ENCODE measurements at regions of chr9 and their contacts with region 1.

Region 1: DNA sequence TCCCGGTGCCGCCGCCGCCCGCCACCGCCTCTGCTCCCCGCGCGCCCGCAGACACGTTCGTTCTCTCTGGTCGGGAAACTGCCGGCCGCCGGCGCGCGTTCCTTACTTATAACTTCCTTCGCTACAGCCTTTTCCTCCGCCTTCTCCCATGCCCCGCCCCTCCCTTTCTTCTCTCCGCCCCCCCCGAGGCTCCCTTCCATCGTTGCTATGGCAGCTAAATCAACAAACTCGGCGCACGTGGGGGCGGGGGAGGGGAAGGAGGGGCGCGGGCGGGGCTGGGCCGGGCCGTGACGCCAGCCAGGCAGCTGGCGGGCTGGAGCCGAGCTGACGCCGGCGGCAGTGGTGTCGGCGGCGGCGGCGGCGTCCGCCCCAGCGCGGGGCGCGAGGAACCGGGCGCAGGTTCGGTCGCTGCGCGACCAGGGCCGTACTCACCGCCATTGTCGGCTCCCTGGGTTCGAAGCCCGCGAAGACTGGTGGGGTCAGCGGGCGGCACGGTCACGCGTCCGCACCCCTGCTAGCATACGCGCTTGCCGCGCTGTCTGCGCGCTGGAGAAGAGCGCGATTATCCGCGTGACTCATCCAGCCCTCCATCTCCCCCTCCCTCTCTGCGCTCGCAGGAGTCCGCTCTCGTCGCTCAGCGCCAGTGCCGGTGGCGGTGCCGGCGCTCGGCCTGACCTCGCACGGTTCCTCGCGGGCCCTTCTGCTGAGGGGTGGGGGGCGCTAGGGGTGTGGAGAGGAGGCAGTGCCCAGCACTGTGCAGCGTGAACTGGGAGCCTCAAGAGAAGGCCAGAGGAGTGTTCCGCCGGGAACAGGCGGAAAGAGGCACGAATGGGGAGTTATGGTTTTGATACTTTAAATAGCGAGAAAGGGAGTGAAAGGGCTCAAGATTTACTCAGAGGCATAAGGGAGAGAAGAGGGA is at the start of gene KLF4:
- DNase-seq: peak; percentile 91 to 96
- H3K4me3 ChIP-seq: peak within 1 kb of the TSS; percentile 79
- H3K27ac ChIP-seq: peak within 1 kb of the TSS; percentile 91 to 94
- H3K4me1 ChIP-seq: peaks cover 0 to 41% (median 16%) of the 10 kb centered on the region in 4 donors
- H3K27me3 ChIP-seq: no peaks in the 10 kb centered on the region
- CTCF ChIP-seq: no peak

Region 2: GRCh38 chr9:107282753-107283625 is 207.0 kb before region 1 on chr9 and contains the start of gene RAD23B:
- intact Hi-C with region 1: loop called (anchors 10 kb)
- DNase-seq: peak; percentile 97 to 99
- H3K4me3 ChIP-seq: peak within 1 kb of the TSS; percentile 74 to 93
- H3K27ac ChIP-seq: peak within 1 kb of the TSS; percentile 97 to 98
- H3K4me1 ChIP-seq: peaks cover 0 to 44% (median 17%) of the 10 kb centered on the region in 4 donors
- H3K27me3 ChIP-seq: no peaks in the 10 kb centered on the region
- CTCF ChIP-seq: no peak

Region 3: GRCh38 chr9:107637421-107638420 is 147.8 kb after region 1 on chr9:
- intact Hi-C with region 1: loop called (anchors 1 kb)
- DNase-seq: peak; percentile 97 to 98
- H3K4me3 ChIP-seq: peak overlapping the region; percentile 46 to 53
- H3K27ac ChIP-seq: peak overlapping the region; percentile 96 to 99
- H3K4me1 ChIP-seq: peaks cover 0 to 27% (median 12%) of the 10 kb centered on the region in 4 donors
- H3K27me3 ChIP-seq: no peaks in the 10 kb centered on the region
- CTCF ChIP-seq: peak; percentile 39 to 51

Region 4: GRCh38 chr9:107732781-107733522 is 243.0 kb after region 1 on chr9:
- intact Hi-C with region 1: loop called (anchors 5 kb)
- DNase-seq: peak; percentile 80
- H3K4me3 ChIP-seq: peak overlapping the region; percentile 28 to 42
- H3K27ac ChIP-seq: peak overlapping the region; percentile 82 to 85
- H3K4me1 ChIP-seq: peaks cover 0 to 44% (median 27%) of the 10 kb centered on the region in 4 donors
- H3K27me3 ChIP-seq: no peaks in the 10 kb centered on the region
- CTCF ChIP-seq: no peak

Region 5: GRCh38 chr9:107749787-107750444 is 260.0 kb after region 1 on chr9:
- intact Hi-C with region 1: loop called (anchors 2 kb)
- DNase-seq: peak; percentile 97
- H3K4me3 ChIP-seq: no peak overlapping the region
- H3K27ac ChIP-seq: peak overlapping the region; percentile 71 to 80
- H3K4me1 ChIP-seq: peaks cover 7 to 36% (median 30%) of the 10 kb centered on the region in 4 donors
- H3K27me3 ChIP-seq: no peaks in the 10 kb centered on the region
- CTCF ChIP-seq: no peak

Region 6: GRCh38 chr9:108478431-108478837 is 988.5 kb after region 1 on chr9:
- intact Hi-C with region 1: loop called (anchors 2 kb)
- DNase-seq: peak; percentile 52 to 86
- H3K4me3 ChIP-seq: no peak overlapping the region
- H3K27ac ChIP-seq: peak overlapping the region; percentile 74 to 81
- H3K4me1 ChIP-seq: peaks cover 0 to 48% (median 17%) of the 10 kb centered on the region in 4 donors
- H3K27me3 ChIP-seq: no peaks in the 10 kb centered on the region
- CTCF ChIP-seq: peak in 1 of 2 experiments; percentile 27